PC-3 (cell line): ENCODE measurements at regions of chr12 and their contacts with region 1.

Region 1: DNA sequence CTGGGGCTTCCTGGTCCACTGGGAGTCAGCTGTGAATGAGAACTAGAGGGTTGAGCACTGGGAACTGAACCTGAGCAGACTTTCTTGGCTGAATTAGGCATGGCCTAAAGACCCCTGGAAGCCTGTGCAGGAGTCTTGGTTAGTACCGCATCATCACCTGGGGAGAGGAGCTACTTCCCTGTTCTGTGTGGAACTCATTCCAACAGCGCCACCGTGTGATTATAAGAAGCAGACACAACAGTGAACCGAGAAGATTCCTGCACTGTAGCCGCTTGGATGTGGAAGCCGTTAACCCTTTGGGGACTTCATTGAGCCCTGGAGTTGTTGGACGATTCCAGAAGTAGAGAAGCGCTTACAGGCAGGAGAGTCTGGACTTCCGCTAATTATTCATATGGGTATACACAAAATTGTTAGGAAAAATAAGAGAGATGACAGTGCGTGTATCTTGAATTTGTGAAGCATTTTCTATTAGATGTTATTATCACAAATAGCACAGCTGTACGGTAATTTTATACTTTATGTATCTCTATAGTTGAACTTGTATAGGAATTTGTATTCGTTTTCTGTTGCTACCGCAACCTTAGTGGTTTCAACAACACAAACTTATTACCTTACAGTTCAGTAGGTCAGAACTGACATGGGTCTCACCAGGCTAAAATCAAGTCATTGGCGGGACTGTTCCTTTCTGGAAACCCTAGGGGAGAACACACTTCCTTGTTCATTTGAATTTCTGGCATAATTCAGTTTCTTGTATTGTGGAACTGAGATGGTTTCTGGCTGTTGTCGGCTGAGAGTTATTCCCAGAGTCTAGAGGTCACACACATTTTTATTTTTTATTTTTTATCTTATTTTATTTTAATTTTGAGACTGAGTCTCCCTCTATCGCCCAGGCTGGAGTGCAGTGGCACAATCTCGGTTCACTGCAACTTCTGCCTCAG is 100.7 kb downstream of the C2CD5 start:
- DNase-seq: peak; percentile 75
- ATAC-seq: peak; percentile 100
- H3K4me3 ChIP-seq: no peak overlapping the region
- H3K27ac ChIP-seq: no peak overlapping the region
- H3K4me1 ChIP-seq: no peaks in the 10 kb centered on the region
- H3K27me3 ChIP-seq: no peaks in the 10 kb centered on the region
- CTCF ChIP-seq: peak; percentile 79

Region 2: DNA sequence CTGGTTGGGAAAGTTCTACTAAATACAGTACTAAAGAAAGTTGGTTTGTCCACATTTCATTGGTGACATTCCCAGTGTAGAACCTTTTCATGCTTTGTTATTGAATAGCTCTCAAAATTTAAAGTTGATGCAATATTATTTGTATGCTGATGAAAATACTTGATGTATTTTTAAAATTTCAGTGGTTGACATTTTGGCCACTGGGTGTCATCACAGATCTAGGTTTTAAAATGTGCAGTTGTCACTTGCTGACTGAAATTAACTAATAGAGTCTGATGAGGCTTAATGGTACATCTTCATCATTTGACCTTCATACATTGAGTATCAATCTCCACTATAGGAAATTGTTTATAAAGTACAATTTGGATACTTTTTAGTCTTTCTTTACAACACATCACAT is 360.5 kb before region 1 on chr12:
- CTCF ChIA-PET with region 1: interaction called, 10 read pairs
- POLR2A ChIA-PET with region 1: no interaction called
- intact Hi-C with region 1: loop called (anchors 1 kb)
- DNase-seq: peak; percentile 46
- ATAC-seq: no peak
- H3K4me3 ChIP-seq: no peak overlapping the region
- H3K27ac ChIP-seq: no peak overlapping the region
- H3K4me1 ChIP-seq: peaks cover 12% of the 10 kb centered on the region; the same call in 1 of the 2 replicates
- H3K27me3 ChIP-seq: no peaks in the 10 kb centered on the region
- CTCF ChIP-seq: peak; percentile 62

Region 3: GRCh38 chr12:22100958-22101748 is 342.5 kb before region 1 on chr12:
- CTCF ChIA-PET with region 1: no interaction called
- POLR2A ChIA-PET with region 1: no interaction called
- intact Hi-C with region 1: loop called (anchors 5 kb)
- DNase-seq: peak; percentile 46
- ATAC-seq: peak; percentile 55; the same call in 1 of the 2 replicates
- H3K4me3 ChIP-seq: no peak overlapping the region
- H3K27ac ChIP-seq: no peak overlapping the region
- H3K4me1 ChIP-seq: no peaks in the 10 kb centered on the region
- H3K27me3 ChIP-seq: no peaks in the 10 kb centered on the region
- CTCF ChIP-seq: peak; percentile 62

Region 4: DNA sequence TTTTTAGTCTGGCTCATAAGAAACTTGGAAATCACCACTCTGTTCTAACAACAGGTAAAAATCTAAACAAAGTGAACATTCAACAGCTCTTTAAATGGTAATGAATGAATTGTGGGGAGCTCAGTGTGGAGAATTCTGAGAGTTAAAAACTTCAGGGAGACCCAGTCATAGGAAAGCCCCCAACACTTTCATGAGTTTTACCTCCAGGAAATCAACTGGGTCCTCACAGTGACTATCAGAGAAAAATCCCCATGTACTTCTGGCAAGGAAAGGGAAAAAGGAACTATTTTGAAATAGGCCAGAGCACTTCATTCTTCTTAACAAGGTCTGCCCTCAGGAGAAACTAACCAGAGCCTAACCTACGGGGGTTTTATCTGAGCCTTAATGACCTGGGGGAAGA is 262.9 kb before region 1 on chr12:
- CTCF ChIA-PET with region 1: no interaction called
- POLR2A ChIA-PET with region 1: no interaction called
- intact Hi-C with region 1: loop called (anchors 10 kb)
- DNase-seq: no peak
- ATAC-seq: no peak
- H3K4me3 ChIP-seq: no peak overlapping the region
- H3K27ac ChIP-seq: no peak overlapping the region
- H3K4me1 ChIP-seq: no peaks in the 10 kb centered on the region
- H3K27me3 ChIP-seq: peaks cover 13% of the 10 kb centered on the region; the same call in 1 of the 2 replicates
- CTCF ChIP-seq: no peak